B cell (primary cell): ENCODE measurements at regions of chr5 and their contacts with region 1.

Region 1: GRCh38 chr5:176530983-176531821 is 6.0 kb downstream of the RNF44 start:
- DNase-seq: no peak
- ATAC-seq: no peak
- H3K4me3 ChIP-seq: no peak overlapping the region
- H3K4me3 Mint-ChIP-seq: peak overlapping the region; percentile 50
- H3K27ac ChIP-seq: peak overlapping the region; percentile 7 to 31
- H3K27ac Mint-ChIP-seq: peak overlapping the region; percentile 76
- H3K4me1 ChIP-seq: peaks cover 62 to 68% of the 10 kb centered on the region in 2 donors
- H3K4me1 Mint-ChIP-seq: peaks cover 55% of the 10 kb centered on the region
- H3K27me3 ChIP-seq: no peaks in the 10 kb centered on the region
- H3K27me3 Mint-ChIP-seq: no peaks in the 10 kb centered on the region
- CTCF ChIP-seq: no peak

Region 2: DNA sequence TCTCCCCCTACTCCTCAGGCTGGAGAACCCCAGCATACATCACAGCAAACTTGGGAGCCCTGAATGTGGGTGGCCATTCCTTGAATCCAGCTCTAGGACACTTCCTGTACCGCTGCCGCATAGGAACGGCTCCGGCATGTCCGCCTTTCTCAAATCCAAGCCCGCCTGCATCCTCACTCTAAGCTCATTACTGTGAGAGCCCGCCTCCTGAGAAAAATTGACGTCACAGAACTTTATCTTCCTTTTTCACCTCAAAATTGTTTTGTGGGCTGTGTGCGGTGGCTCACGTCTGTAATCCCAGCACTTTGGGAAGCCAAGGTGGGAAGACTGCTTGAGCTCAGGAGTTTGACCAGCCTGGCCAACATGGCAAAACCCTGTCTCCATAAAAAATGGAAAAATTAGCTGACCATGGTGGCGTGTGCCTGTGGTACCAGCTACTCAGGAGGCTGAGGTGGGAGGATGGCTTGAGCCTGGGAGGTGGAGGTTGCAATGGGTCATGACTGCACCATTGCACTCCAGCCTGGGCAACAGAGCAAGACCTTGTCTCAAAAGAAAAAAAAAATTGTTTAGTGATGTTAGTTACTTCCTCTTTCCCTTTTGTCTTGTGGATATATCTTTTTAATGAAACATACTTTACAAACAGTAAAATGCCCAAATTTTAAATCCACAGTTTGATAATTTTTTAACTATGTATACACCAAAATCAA is 16.8 kb before region 1 on chr5:
- CTCF ChIA-PET with region 1: interaction called, 3 read pairs
- POLR2A ChIA-PET with region 1: interaction called, 14 read pairs
- intact Hi-C with region 1: loop called (anchors 2 kb)
- DNase-seq: peak; percentile 56
- ATAC-seq: peak; percentile 79
- H3K4me3 ChIP-seq: peak overlapping the region in 1 of 5 experiments; percentile 15
- H3K4me3 Mint-ChIP-seq: peak overlapping the region; percentile 76
- H3K27ac ChIP-seq: peak overlapping the region; percentile 34 to 60
- H3K27ac Mint-ChIP-seq: peak overlapping the region; percentile 88
- H3K4me1 ChIP-seq: peaks cover 13 to 15% of the 10 kb centered on the region in 2 donors
- H3K4me1 Mint-ChIP-seq: peaks cover 26% of the 10 kb centered on the region
- H3K27me3 ChIP-seq: no peaks in the 10 kb centered on the region
- H3K27me3 Mint-ChIP-seq: no peaks in the 10 kb centered on the region
- CTCF ChIP-seq: no peak

Region 3: GRCh38 chr5:177620560-177620959 is 1089.4 kb after region 1 on chr5:
- CTCF ChIA-PET with region 1: no interaction called
- POLR2A ChIA-PET with region 1: no interaction called
- intact Hi-C with region 1: no loop called
- DNase-seq: no peak
- ATAC-seq: no peak
- H3K4me3 ChIP-seq: no peak overlapping the region
- H3K4me3 Mint-ChIP-seq: no peak overlapping the region
- H3K27ac ChIP-seq: no peak overlapping the region
- H3K27ac Mint-ChIP-seq: no peak overlapping the region
- H3K4me1 ChIP-seq: no peaks in the 10 kb centered on the region
- H3K4me1 Mint-ChIP-seq: no peaks in the 10 kb centered on the region
- H3K27me3 ChIP-seq: no peaks in the 10 kb centered on the region
- H3K27me3 Mint-ChIP-seq: no peaks in the 10 kb centered on the region
- CTCF ChIP-seq: no peak